ENCODE measurements at regions of chr3 and their contacts with region 1.

Region 1: DNA sequence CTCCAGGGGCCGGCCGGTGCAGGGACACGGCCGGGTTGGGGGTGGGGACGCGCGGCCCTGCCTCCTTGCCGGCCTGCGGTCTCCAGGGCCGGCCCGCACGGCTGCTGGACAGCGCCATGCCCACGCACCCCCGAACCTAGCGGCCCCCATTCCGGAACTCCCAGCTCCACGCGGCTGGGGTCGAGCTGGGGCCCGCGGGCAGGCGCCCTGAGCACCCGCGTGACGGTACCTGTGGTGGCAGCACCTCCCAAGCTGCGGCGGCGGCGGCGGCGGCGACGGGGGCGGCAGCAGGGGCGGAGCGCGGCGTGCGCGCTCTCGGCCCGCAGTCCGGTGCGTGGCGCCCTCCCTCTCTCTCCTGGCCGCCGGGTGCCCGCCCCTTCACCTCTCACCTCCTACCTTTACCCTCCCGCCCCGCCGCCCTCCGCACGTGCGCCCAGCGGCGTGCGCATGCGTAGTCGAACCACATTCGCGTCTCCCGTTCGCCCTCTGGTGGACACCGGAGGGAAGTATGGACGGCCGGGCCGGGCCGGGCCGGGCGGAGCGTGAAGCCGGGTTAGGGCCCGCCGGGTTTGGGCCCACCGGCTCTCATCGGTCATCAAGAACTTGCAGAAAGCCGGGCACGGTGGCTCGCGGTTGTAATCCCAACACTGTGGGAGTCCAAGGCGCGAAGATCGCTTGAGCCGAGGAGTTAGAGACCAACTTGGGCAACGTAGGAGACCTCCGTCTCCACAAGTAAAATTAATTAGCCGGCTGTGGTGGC is at the start of gene SCAP:
- DNase-seq: peak; percentile 94 to 98
- ATAC-seq: peak; percentile 98
- H3K4me3 ChIP-seq: peak within 1 kb of the TSS; percentile 75 to 98
- H3K27ac ChIP-seq: peak within 1 kb of the TSS in 1 of 2 donors; percentile 87
- H3K4me1 ChIP-seq: no peaks in the 10 kb centered on the region
- H3K27me3 ChIP-seq: no peaks in the 10 kb centered on the region
- total RNA-seq, gene SCAP: 57.4 to 66.1 TPM

Region 2: GRCh38 chr3:47420511-47421484 is 55.0 kb before region 1 on chr3:
- intact Hi-C with region 1: loop called (anchors 1 to 2 kb)
- DNase-seq: peak; percentile 92 to 95
- ATAC-seq: peak; percentile 88
- H3K4me3 ChIP-seq: no peak overlapping the region
- H3K27ac ChIP-seq: peak overlapping the region in 1 of 2 donors; percentile 53
- H3K4me1 ChIP-seq: no peaks in the 10 kb centered on the region
- H3K27me3 ChIP-seq: no peaks in the 10 kb centered on the region